ENCODE measurements at regions of chr22 and their contacts with region 1.

Region 1: DNA sequence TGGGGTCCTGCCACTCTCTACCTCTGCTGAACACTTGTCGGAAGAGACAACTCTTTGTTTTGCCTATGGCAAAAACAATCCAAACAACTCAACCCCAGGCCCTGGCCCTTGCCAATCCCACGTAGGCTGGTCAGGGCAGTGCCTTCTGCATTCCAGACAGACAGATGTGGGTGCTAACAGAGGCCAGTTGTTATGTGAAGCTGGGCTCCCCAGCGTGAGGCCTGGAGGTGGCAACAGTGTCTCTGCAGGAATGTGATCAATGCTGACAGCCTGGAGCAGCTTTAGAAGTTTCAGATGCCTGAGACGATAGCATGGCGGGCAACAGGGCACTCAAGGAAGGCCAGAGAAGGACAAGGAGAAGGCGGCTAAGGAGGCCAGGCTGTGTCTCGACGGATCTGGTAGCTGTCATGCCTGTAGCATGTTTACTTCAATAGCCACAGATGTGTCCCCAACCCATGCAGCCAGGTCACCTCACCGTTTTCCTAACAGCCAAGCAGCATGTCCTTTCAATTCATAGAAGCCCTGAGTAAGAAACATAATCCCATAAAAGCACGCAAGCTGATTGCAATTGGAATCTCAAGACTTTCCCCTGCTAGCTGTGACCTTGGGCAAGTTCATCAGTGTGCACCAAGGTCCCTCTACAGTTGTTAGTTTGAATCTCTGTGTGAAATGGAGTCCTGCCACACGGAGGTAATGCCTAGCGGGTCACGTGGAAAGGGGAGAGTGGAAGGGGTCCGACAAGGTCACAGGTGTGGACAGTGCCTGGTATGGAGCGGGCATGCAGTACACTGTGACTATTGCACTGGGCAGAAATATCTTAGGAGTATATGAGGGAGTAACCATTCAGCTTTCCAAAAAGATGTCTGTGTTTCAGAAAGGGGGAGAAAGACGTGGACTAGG is 14.2 kb upstream of the PPM1F start:
- DNase-seq: peak in 1 of 5 donors; percentile 13
- ATAC-seq: no peak
- H3K4me3 ChIP-seq: no peak overlapping the region
- H3K27ac ChIP-seq: no peak overlapping the region
- H3K4me1 ChIP-seq: no peaks in the 10 kb centered on the region
- H3K27me3 ChIP-seq: no peaks in the 10 kb centered on the region
- CTCF ChIP-seq: no peak
- POLR2A ChIP-seq: no peak

Region 2: GRCh38 chr22:21927174-21927823 is 39.6 kb before region 1 on chr22:
- intact Hi-C with region 1: loop called in 1 of 10 experiments (anchors 5 kb)
- DNase-seq: no peak
- ATAC-seq: peak in 1 of 4 donors; percentile 4
- H3K4me3 ChIP-seq: no peak overlapping the region
- H3K27ac ChIP-seq: no peak overlapping the region
- H3K4me1 ChIP-seq: peaks cover 0 to 15% (median 0%) of the 10 kb centered on the region in 12 donors
- H3K27me3 ChIP-seq: no peaks in the 10 kb centered on the region
- CTCF ChIP-seq: no peak
- POLR2A ChIP-seq: no peak

Region 3: GRCh38 chr22:22099833-22100812 is 133.3 kb after region 1 on chr22:
- intact Hi-C with region 1: no loop called
- DNase-seq: no peak
- ATAC-seq: no peak
- H3K4me3 ChIP-seq: no peak overlapping the region
- H3K27ac ChIP-seq: no peak overlapping the region
- H3K4me1 ChIP-seq: no peaks in the 10 kb centered on the region
- H3K27me3 ChIP-seq: peaks cover 0 to 7% (median 0%) of the 10 kb centered on the region in 9 donors
- CTCF ChIP-seq: no peak
- POLR2A ChIP-seq: no peak

Measured in heart left ventricle (tissue), 16 donors.